A673 (cell line): ENCODE measurements at regions of chrX and their contacts with region 1.

Region 1: GRCh38 chrX:133670383-133670782 is 255.1 kb upstream of the GPC4 start:
- DNase-seq: peak; percentile 64
- H3K4me3 ChIP-seq: no peak overlapping the region
- H3K27ac ChIP-seq: no peak overlapping the region
- H3K4me1 ChIP-seq: no peaks in the 10 kb centered on the region
- H3K27me3 ChIP-seq: no peaks in the 10 kb centered on the region
- CTCF ChIP-seq: peak; percentile 84

Region 2: GRCh38 chrX:133005066-133005465 is 665.3 kb before region 1 on chrX:
- CTCF ChIA-PET with region 1: interaction called, 12 read pairs
- POLR2A ChIA-PET with region 1: no interaction called
- intact Hi-C with region 1: loop called (anchors 10 kb)
- DNase-seq: peak; percentile 41
- H3K4me3 ChIP-seq: no peak overlapping the region
- H3K27ac ChIP-seq: no peak overlapping the region
- H3K4me1 ChIP-seq: no peaks in the 10 kb centered on the region
- H3K27me3 ChIP-seq: no peaks in the 10 kb centered on the region
- CTCF ChIP-seq: peak; percentile 81

Region 3: GRCh38 chrX:133335027-133335426 is 335.4 kb before region 1 on chrX:
- CTCF ChIA-PET with region 1: interaction called, 6 read pairs
- POLR2A ChIA-PET with region 1: no interaction called
- intact Hi-C with region 1: loop called (anchors 1 kb)
- DNase-seq: peak; percentile 82
- H3K4me3 ChIP-seq: no peak overlapping the region
- H3K27ac ChIP-seq: no peak overlapping the region
- H3K4me1 ChIP-seq: peaks cover 17% of the 10 kb centered on the region
- H3K27me3 ChIP-seq: no peaks in the 10 kb centered on the region
- CTCF ChIP-seq: peak; percentile 75

Region 4: DNA sequence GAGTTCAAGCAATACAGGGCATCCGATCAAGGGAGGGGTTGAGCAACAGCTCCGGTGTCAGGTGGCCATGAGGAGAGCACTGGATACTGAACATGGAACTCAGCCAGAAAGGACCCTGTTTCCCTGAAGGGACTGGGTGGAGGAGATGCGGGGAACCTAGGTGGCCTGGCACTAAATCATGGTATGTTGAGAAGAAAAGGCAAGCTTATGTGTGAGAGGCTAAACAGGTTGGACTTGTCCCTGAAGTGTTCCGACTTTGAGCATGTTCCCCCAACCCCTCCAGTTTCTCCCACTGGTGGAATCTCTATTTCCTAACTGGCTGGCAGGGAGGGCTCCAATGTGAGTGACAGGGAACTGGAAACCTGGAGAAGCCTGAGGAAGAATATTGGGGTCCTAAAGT is 918.4 kb after region 1 on chrX:
- CTCF ChIA-PET with region 1: no interaction called
- POLR2A ChIA-PET with region 1: no interaction called
- intact Hi-C with region 1: no loop called
- DNase-seq: no peak
- H3K4me3 ChIP-seq: no peak overlapping the region
- H3K27ac ChIP-seq: no peak overlapping the region
- H3K4me1 ChIP-seq: no peaks in the 10 kb centered on the region
- H3K27me3 ChIP-seq: no peaks in the 10 kb centered on the region
- CTCF ChIP-seq: no peak